Mammary epithelial cell (primary cell): ENCODE measurements at regions of chr11 and their contacts with region 1.

Region 1: DNA sequence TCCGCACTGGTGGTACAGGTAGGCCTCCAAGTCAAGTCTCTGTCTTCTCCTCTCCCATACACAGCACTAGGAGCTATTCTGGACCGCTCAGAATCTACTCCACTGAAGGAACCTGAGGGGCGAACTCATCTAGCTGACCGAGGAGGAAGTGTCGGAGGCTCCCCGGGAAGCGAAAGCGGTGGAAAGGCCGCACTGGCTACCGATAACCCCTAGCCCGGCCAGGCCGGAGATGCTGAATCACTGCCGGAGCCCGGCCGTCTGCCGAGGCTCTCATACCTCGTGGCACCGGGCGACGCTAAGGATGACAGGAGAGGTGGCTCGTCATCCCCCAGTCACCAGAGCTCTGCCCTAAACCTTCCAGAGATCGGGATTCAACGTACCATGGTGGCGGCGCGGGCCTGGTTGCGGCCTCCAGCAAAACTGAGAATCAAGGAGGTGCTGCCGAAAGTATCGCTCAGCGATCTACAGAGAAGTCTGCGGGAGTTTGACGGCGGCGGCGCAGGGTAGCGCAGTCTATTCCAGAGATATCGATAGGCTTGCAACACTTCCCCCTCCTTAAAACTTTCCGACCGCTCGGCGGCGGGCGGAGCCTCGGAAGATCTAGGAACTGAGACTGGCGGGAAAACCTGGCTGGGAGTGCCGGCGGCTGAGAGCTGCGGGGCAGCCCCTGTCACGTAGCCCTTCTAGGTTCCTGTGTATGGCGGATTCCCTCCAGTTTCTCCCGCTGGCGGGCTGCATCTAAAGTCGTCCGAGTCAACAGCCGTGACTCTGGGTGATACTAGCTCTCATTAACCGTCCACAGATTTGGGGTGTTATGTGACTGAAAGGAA is at the start of gene PSMA1:
- DNase-seq: peak; percentile 96
- H3K4me3 ChIP-seq: peak within 1 kb of the TSS; percentile 72 to 98 (median 93)
- H3K27ac ChIP-seq: peak within 1 kb of the TSS; percentile 97
- H3K4me1 ChIP-seq: peaks cover 5% of the 10 kb centered on the region
- H3K27me3 ChIP-seq: no peaks in the 10 kb centered on the region
- CTCF ChIP-seq: peak in 1 of 2 donors; percentile 20
- total RNA-seq, gene PSMA1: 107 to 154 TPM

Region 2: GRCh38 chr11:14054116-14055107 is 465.7 kb before region 1 on chr11:
- CTCF ChIA-PET with region 1: no interaction called
- dilution Hi-C with region 1: no loop called
- in situ Hi-C with region 1: no loop called
- intact Hi-C with region 1: no loop called
- DNase-seq: peak; percentile 39
- H3K4me3 ChIP-seq: no peak overlapping the region
- H3K27ac ChIP-seq: no peak overlapping the region
- H3K4me1 ChIP-seq: peaks cover 25% of the 10 kb centered on the region
- H3K27me3 ChIP-seq: no peaks in the 10 kb centered on the region
- CTCF ChIP-seq: no peak

Region 3: GRCh38 chr11:14499554-14500180 is 20.5 kb before region 1 on chr11 and contains the start of gene COPB1:
- CTCF ChIA-PET with region 1: no interaction called
- dilution Hi-C with region 1: no loop called
- in situ Hi-C with region 1: no loop called
- intact Hi-C with region 1: loop called (anchors 1 kb)
- DNase-seq: peak; percentile 89
- H3K4me3 ChIP-seq: peak within 1 kb of the TSS; percentile 72 to 96 (median 86)
- H3K27ac ChIP-seq: peak within 1 kb of the TSS; percentile 67
- H3K4me1 ChIP-seq: peaks cover 5% of the 10 kb centered on the region
- H3K27me3 ChIP-seq: no peaks in the 10 kb centered on the region
- CTCF ChIP-seq: no peak
- total RNA-seq, gene COPB1: 119 to 217 TPM

Region 4: DNA sequence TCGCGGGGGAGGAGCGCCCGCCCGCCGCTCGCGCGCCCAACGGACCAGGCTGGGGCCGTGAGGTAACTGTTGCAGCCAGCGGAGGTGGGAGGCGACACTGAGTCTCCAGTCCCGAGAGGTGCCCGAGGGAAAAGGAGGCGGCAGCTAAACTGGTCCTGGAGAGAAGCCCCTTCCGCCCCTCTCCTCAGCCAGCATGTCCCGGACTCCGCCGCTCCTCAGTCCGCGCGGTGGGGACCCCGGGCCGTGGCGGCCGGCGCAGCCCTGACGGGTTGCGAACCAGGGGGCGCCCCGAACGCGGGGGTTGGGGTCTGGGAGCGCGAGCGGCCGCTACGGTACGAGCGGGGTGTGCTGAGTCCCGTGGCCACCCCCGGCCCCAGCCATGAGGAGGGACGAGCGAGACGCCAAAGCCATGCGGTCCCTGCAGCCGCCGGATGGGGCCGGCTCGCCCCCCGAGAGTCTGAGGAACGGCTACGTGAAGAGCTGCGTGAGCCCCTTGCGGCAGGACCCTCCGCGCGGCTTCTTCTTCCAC is 123.6 kb after region 1 on chr11 and contains the start of gene PDE3B:
- CTCF ChIA-PET with region 1: no interaction called
- dilution Hi-C with region 1: no loop called
- in situ Hi-C with region 1: no loop called
- intact Hi-C with region 1: loop called (anchors 1 kb)
- DNase-seq: peak; percentile 3
- H3K4me3 ChIP-seq: peak within 1 kb of the TSS; percentile 47 to 58 (median 54)
- H3K27ac ChIP-seq: no peak within 1 kb of the TSS
- H3K4me1 ChIP-seq: peaks cover 14% of the 10 kb centered on the region
- H3K27me3 ChIP-seq: peaks cover 46% of the 10 kb centered on the region
- CTCF ChIP-seq: no peak
- total RNA-seq, gene PDE3B: not detected

Region 5: GRCh38 chr11:14892036-14892567 is 372.0 kb after region 1 on chr11 and contains the start of gene CYP2R1:
- CTCF ChIA-PET with region 1: no interaction called
- dilution Hi-C with region 1: no loop called
- in situ Hi-C with region 1: loop called in 1 of 2 experiments (anchors 25 kb)
- intact Hi-C with region 1: loop called (anchors 1 kb)
- DNase-seq: peak; percentile 97
- H3K4me3 ChIP-seq: peak within 1 kb of the TSS; percentile 52 to 66 (median 62)
- H3K27ac ChIP-seq: peak within 1 kb of the TSS; percentile 55
- H3K4me1 ChIP-seq: no peaks in the 10 kb centered on the region
- H3K27me3 ChIP-seq: no peaks in the 10 kb centered on the region
- CTCF ChIP-seq: no peak
- total RNA-seq, gene CYP2R1: 15.3 to 15.4 TPM

Region 6: DNA sequence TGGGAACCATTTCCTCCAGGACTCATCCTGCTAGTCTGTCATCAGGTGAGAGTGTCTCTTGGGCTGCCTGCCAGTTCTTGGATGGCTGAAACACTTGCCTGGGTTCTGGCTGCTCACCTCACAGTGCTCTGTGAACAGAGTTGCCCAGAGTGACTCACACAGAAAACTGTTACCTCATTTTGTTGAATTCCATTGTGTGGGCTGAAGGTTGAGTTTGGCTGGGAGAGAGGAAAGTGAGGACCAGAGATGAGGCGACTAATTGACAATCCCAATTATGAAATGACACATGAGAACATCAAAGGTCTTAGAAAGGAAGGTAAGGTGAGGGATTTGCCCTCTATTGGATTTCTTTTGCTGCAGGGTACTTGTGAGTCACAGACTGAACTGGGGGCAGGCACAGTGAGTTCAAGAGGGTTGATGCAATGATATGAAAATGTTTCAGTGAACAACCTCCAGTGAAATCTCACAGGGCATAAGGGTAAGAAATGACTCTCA is 533.1 kb after region 1 on chr11:
- CTCF ChIA-PET with region 1: no interaction called
- dilution Hi-C with region 1: no loop called
- in situ Hi-C with region 1: no loop called
- intact Hi-C with region 1: loop called (anchors 10 kb)
- DNase-seq: peak; percentile 78
- H3K4me3 ChIP-seq: no peak overlapping the region
- H3K27ac ChIP-seq: peak overlapping the region; percentile 3
- H3K4me1 ChIP-seq: peaks cover 13% of the 10 kb centered on the region
- H3K27me3 ChIP-seq: no peaks in the 10 kb centered on the region
- CTCF ChIP-seq: no peak

Region 7: DNA sequence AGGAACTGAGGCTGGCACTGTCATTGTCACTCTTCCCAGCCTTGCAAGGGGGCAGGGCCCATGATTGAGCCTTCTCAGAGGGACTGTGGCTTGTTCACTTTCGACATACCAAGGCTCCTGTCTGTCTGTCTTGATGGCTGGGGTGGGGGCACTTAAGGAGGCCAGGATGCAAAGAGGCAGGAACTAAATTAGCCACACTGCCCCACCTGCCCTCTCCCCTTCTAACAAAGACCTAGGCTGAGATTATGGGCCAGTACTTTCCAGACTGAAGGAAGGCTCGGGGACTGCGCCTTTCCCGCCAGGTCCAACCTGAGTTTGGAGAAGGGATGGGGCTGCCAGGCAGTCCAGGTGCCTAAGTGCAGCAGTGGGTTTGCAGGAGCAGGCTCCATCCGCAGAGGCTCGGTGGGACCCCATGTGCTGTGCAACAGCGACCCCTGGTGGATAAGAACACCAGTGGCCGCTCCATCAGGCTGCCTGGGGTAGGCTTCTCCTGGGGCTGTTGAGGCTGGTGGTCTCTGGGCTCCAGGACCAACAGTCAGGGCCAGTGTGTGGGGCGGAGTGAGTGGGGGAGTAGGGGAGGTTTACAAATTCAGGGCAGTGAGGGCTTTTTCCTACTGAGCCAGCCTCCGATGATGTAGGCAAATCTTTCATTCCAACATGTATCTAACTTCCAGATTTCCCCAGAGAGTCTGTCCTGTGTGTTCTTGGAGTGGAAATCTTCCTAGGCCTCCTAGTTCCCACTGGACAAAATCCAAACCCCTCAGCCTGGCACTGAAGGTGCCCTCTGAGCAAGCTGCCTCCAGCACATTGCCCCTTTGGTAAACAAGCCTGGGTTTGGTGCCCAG is 688.5 kb after region 1 on chr11:
- CTCF ChIA-PET with region 1: no interaction called
- dilution Hi-C with region 1: no loop called
- in situ Hi-C with region 1: no loop called
- intact Hi-C with region 1: loop called (anchors 10 kb)
- DNase-seq: peak; percentile 27
- H3K4me3 ChIP-seq: no peak overlapping the region
- H3K27ac ChIP-seq: no peak overlapping the region
- H3K4me1 ChIP-seq: no peaks in the 10 kb centered on the region
- H3K27me3 ChIP-seq: no peaks in the 10 kb centered on the region
- CTCF ChIP-seq: peak; percentile 80 to 94